ENCODE measurements at regions of chrX and their contacts with region 1.

Region 1: GRCh38 chrX:107118322-107119147 is at the start of gene RBM41:
- DNase-seq: peak; percentile 84
- H3K4me3 ChIP-seq: peak within 1 kb of the TSS; percentile 70
- H3K27ac ChIP-seq: peak within 1 kb of the TSS; percentile 80
- H3K4me1 ChIP-seq: no peaks in the 10 kb centered on the region
- H3K27me3 ChIP-seq: no peaks in the 10 kb centered on the region
- CTCF ChIP-seq: no peak
- total RNA-seq, gene RBM41: 17.7 and 19.0 TPM in 2 replicates

Region 2: GRCh38 chrX:106917830-106918500 is 200.6 kb before region 1 on chrX:
- CTCF ChIA-PET with region 1: no interaction called
- POLR2A ChIA-PET with region 1: interaction called, 15 read pairs
- intact Hi-C with region 1: no loop called
- DNase-seq: peak; percentile 78
- H3K4me3 ChIP-seq: no peak overlapping the region
- H3K27ac ChIP-seq: no peak overlapping the region
- H3K4me1 ChIP-seq: peaks cover 13% of the 10 kb centered on the region
- H3K27me3 ChIP-seq: no peaks in the 10 kb centered on the region
- CTCF ChIP-seq: no peak

Measured in A673 (cell line).